Right ventricle myocardium inferior (tissue), 1 donor: ENCODE measurements at regions of chr4 and their contacts with region 1.

Region 1: DNA sequence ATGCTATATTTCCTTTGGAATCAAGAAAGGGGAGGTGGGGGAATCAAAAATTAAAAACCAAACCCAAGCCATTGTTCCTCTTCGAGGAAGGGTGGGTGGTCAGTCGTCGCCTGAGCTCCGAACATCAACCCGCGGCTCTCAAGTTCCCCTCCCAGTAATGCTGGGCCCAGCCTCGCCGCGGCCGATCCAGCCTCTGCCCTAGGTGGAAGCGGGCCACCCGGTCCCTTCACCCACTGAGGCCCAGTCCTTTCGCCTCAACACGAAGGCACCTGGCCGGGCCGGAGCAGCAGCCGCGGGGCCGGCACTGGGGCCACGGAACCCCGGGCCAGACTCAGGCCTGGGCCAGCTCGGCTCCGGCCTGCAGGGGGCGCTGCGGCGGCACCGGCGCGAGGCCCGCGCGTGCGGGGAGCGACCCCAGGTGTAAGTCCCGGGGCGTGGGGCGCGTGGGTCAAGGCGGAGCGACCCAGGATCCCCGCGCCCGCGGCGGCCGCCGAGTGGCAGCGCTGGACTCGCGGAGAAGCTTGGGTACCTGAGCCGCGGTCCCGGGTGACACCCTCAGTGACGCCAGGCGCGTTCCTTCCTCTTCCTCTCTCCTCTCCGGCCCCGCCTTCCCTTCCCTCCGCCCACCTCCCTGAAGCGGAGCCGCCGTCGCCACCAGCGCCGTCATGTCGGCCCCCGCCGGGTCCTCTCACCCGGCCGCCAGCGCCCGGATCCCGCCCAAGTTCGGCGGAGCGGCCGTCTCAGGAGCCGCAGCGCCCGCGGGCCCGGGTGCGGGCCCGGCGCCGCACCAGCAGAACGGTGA is at the start of gene SEC24B:
- DNase-seq: peak; percentile 96
- ATAC-seq: peak; percentile 96
- total RNA-seq, gene SEC24B: 26.1 TPM

Region 2: DNA sequence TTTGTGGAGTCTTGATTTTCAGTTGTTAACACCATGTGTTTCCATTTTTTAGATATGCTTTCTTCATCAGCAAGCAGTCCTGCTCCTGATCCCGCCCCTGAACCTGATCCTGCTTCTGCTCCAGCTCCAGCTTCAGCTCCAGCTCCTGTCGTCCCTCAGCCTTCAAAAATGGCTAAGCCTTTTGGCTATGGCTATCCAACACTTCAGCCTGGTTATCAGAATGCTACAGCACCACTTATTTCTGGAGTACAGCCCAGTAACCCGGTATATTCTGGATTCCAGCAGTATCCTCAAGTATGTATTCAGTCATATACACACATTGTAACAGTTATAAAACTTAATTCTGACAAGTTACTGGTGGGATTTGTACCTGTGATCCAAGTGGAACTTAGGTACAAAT is 61.2 kb after region 1 on chr4:
- intact Hi-C with region 1: loop called (anchors 5 kb)
- DNase-seq: no peak
- ATAC-seq: peak; percentile 89

Region 3: DNA sequence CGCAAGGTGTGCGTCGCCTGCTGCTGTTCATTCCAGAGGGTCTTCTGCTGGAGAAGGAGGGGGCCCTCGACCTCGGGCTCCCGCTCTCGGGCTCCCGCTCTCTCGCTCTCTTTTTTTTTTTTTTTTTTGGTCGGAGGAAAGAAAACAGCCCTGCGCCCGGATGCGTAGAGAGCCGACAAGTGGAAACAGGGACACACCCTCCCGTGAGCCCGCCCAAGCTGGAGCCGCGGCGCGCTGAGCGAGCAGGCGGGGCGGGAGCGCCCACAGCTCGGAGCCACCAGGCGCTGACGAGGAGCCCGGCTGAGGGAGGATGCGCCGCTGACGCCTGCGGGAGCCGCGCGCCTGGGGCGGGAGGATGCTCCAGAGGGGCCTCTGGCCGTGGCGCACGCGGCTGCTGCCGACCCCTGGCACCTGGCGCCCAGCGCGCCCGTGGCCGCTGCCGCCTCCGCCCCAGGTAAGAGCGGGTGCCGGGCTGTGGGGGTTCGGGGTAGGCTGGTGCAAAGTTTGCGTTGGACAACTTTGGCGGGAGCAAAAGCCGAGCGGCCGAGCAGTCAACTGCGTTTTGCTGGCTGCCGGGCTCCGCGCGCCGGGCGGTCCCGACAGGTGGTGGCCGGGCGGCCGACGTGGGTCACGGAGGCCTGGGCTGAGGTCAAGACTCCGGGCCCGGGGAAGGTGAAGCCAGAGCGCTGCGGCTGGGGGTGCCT is 126.7 kb after region 1 on chr4 and contains the start of gene MCUB:
- intact Hi-C with region 1: loop called (anchors 2 kb)
- DNase-seq: peak; percentile 94
- ATAC-seq: peak; percentile 99
- total RNA-seq, gene MCUB: 5.1 TPM